Gastrocnemius medialis (tissue), 4 donors: ENCODE measurements at regions of chr2 and their contacts with region 1.

Region 1: DNA sequence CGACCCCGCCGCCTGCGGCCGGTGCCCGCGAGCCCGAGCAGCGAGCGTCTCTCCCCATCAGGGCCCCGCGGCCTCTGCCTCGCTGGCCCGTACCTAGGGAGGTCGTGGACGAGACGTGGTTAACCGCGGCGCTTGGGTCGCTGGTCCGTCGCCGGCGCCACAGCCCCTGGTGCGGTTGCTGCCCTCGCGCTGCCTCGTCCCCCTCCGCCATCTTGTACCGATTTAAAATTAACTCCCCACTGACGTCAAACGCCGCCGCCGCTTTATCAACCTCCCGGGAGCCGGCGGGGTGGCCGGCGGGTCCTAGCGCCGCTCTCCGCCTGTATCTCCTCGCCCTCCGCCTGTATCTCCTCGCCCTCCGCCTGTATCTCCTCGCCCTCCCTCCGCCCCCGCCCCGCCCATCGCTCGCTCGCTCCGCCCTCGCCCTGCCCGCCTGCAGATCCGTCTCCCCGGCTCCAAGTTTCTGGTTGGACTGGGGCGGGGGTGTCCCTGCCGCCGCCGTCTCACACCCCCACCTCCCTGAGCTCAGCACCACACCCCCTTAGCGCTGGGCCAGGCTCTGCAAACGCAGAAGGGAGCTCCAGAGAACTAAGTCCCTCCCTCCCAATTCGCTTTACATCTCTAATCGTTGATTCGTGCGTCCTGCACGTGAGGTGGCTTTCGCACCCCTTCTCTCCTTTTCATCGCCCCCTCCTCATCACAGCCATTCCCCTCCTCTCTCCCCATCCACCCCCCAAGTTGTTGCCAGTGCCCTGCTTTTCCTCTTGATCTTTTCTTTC is at the start of gene ATL2:
- DNase-seq: peak; percentile 96
- ATAC-seq: peak; percentile 88 to 90
- H3K4me3 ChIP-seq: peak within 1 kb of the TSS; percentile 79 to 96 (median 90)
- H3K27ac ChIP-seq: peak within 1 kb of the TSS; percentile 93 to 99 (median 97)
- H3K4me1 ChIP-seq: peaks cover 38 to 42% of the 10 kb centered on the region in 2 donors
- H3K27me3 ChIP-seq: no peaks in the 10 kb centered on the region
- CTCF ChIP-seq: no peak
- POLR2A ChIP-seq: peak; percentile 96 to 97
- total RNA-seq, gene ATL2: 60.1 to 130 (median 108) TPM

Region 2: DNA sequence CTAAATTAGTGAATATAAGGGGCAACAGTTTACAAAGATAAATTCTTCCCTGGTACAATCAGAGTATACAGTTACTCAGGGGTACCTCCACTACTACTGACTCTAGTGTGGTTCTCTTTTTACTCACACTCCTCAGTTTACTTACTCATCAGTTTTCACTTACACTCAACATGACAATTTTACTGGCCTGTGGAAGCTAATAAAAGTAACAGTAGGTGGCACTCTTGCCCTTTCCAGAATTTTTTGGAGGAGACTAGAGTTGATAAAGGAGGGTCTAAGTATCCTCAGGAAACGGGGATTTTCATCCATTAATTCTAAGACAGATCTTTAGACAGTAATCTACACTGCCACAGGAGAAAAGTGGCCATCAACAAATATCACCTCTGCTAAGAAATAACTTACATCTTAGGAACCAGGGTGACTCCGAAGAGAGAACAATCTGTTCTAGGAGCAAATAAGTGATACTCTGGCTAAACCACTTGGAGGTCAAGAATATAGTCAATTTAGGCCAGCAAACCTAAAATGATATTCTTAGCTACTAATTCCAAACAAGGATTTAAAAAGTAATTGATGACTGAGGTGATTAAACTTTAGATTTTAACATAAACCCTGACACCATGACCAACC is 61.4 kb before region 1 on chr2:
- in situ Hi-C with region 1: no loop called
- intact Hi-C with region 1: loop called (anchors 2 kb)
- DNase-seq: no peak
- ATAC-seq: peak; percentile 72 to 79
- H3K4me3 ChIP-seq: no peak overlapping the region
- H3K27ac ChIP-seq: peak overlapping the region in 1 of 4 donors; percentile 6
- H3K4me1 ChIP-seq: peaks cover 0 to 3% of the 10 kb centered on the region in 2 donors
- H3K27me3 ChIP-seq: no peaks in the 10 kb centered on the region
- CTCF ChIP-seq: peak; percentile 42 to 79 (median 70)
- POLR2A ChIP-seq: no peak

Region 3: GRCh38 chr2:38508311-38509039 is 131.2 kb after region 1 on chr2:
- in situ Hi-C with region 1: no loop called
- intact Hi-C with region 1: loop called (anchors 5 kb)
- DNase-seq: peak; percentile 83 to 92
- ATAC-seq: peak; percentile 39 to 42
- H3K4me3 ChIP-seq: no peak overlapping the region
- H3K27ac ChIP-seq: peak overlapping the region; percentile 55 to 79 (median 78)
- H3K4me1 ChIP-seq: peaks cover 38 to 53% of the 10 kb centered on the region in 2 donors
- H3K27me3 ChIP-seq: no peaks in the 10 kb centered on the region
- CTCF ChIP-seq: peak in 1 of 5 experiments; percentile 28
- POLR2A ChIP-seq: peak in 1 of 2 donors; percentile 30

Region 4: GRCh38 chr2:38602732-38603401 is 225.6 kb after region 1 on chr2 and contains the start of gene HNRNPLL:
- in situ Hi-C with region 1: no loop called
- intact Hi-C with region 1: loop called (anchors 2 kb)
- DNase-seq: peak; percentile 97 to 99
- ATAC-seq: peak; percentile 86 to 88
- H3K4me3 ChIP-seq: peak within 1 kb of the TSS; percentile 80 to 93 (median 90)
- H3K27ac ChIP-seq: peak within 1 kb of the TSS; percentile 94 to 98 (median 98)
- H3K4me1 ChIP-seq: peaks cover 34 to 43% of the 10 kb centered on the region in 2 donors
- H3K27me3 ChIP-seq: no peaks in the 10 kb centered on the region
- CTCF ChIP-seq: no peak
- POLR2A ChIP-seq: peak; percentile 98
- total RNA-seq, gene HNRNPLL: 20.0 to 42.9 (median 21.9) TPM

Region 5: DNA sequence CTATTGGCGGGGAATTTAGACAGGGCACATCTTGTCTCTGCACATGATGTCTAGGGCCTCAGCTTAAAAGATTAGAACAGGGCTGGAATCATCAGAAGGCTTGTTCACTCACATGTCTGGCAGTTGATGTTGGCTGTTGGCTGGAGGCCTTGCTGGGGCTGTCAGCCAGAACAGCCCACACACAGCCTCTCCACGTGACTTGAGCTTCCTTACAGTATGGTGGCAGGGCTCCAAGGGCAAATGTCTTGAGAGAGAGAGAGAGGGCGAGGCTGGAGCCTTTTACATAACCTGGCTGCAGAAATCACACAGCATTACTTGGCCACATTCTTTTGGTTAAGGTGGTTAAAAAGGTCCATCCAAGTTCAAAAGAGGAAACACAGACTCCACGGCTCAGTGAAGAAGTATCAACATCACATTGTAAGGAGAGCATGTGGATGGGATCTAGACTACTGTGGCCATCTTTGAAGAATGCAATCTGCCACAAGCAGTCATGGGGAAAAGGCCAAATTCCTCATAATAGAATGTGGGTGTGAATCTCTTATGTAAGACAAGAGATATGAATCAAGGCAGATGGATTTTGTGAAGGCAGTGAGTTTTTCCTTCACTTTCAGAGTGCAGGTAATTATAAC is 343.5 kb after region 1 on chr2:
- in situ Hi-C with region 1: loop called in 1 of 4 experiments (anchors 25 kb)
- intact Hi-C with region 1: loop called (anchors 2 kb)
- DNase-seq: peak; percentile 79 to 88
- ATAC-seq: peak; percentile 76 to 91
- H3K4me3 ChIP-seq: no peak overlapping the region
- H3K27ac ChIP-seq: peak overlapping the region; percentile 76 to 90 (median 88)
- H3K4me1 ChIP-seq: peaks cover 29 to 32% of the 10 kb centered on the region in 2 donors
- H3K27me3 ChIP-seq: no peaks in the 10 kb centered on the region
- CTCF ChIP-seq: no peak
- POLR2A ChIP-seq: no peak

Region 6: DNA sequence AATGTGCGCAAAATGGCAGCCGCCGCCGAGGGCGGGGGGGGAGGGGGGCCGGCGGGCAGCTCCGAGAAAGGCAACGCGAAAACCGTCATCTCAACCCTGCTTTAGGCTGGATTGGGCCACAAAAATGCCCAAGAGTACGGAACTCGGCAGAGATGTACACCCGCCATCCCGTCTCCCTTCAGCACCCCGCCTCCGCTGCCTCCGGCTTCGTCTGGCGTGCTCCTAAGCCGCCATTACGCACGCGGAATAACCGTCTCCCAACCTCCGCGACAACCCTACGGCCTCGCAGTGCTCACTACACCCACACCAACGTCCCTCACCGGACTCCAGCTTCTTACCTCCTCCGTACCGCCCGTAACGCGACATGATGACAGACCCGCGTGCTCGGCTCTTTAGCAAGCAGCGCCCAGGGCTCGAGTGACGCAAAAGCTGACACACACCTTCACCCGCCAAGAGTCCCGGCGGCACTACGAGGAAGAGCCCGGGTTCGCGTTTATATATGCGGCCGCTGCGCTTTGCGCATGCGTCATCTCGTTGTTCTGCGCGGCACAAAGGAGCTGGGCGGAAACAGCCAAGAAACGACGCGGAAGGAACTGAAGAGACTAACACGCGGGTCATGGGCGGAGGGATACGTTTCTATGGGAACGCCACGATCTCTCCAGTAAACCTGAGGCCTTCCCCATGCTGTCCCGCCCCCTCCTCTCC is 373.8 kb after region 1 on chr2 and contains the start of gene SRSF7:
- in situ Hi-C with region 1: loop called in 1 of 4 experiments (anchors 25 kb)
- intact Hi-C with region 1: loop called (anchors 2 kb)
- DNase-seq: peak; percentile 96 to 97
- ATAC-seq: peak; percentile 94 to 96
- H3K4me3 ChIP-seq: peak within 1 kb of the TSS; percentile 72 to 88 (median 82)
- H3K27ac ChIP-seq: peak within 1 kb of the TSS; percentile 96 to 98 (median 97)
- H3K4me1 ChIP-seq: peaks cover 24 to 26% of the 10 kb centered on the region in 2 donors
- H3K27me3 ChIP-seq: no peaks in the 10 kb centered on the region
- CTCF ChIP-seq: no peak
- POLR2A ChIP-seq: peak; percentile 100
- total RNA-seq, gene SRSF7: 21.5 to 51.4 (median 34.1) TPM

Region 7: GRCh38 chr2:39837856-39838453 is 1460.7 kb after region 1 on chr2:
- in situ Hi-C with region 1: no loop called
- intact Hi-C with region 1: no loop called
- DNase-seq: no peak
- ATAC-seq: no peak
- H3K4me3 ChIP-seq: no peak overlapping the region
- H3K27ac ChIP-seq: no peak overlapping the region
- H3K4me1 ChIP-seq: no peaks in the 10 kb centered on the region
- H3K27me3 ChIP-seq: no peaks in the 10 kb centered on the region
- CTCF ChIP-seq: peak in 2 of 5 experiments; percentile 24 to 48
- POLR2A ChIP-seq: no peak